Activated T-helper 1 cell treated with anti-CD3 and anti-CD28 coated beads, Interleukin-12 subunit alpha, Interleukin-12 subunit beta, Interleukin-2, Interleukin-4 antibody, amounts not matched to agents 30 ng/mL and 10 ng/mL and 1 ng/mL, durations not matched to agents 14 hours and 24 hours and 36 hours (primary cell): ENCODE measurements at regions of chr4 and their contacts with region 1.

Region 1: DNA sequence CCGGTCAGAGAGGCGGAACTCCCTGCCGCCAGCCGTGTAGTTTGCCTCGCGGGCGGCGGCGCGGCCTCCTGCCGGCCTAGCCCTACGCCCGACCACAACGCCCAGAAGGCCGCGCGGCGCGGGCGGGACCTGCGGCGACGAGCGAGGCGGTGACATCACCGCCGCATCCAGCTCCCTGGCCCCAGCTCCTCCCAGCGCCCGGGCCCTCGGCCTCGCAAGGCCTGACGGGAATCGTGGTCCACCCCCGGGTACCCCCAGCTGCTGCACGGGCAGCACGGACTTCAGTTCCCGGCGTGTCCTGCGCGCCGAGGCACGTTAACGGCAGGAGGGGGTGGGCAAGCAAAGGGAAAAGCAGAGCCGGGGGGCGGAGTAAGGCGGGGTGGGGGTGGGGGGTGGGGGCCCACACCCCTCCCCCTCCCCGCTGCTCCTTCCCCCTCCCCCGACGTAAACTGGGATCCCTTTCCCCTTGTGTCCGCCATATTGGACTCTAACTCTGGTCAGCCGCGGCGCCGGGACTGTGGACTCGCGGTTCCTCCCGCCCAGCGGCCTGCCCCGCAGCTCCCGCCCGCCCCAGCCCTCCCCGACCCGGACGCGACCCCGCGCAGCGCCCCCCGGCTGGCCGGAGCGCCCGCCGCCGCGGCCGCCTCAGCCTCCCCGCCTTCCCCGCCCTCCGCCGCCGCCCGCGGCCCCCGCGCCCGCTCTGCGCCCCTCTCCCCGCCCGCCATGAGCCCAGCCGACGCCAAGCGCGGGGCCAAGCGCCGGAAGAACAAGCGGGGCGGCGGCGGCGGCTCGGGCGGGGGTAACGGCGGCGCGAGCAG is at the start of gene FAM193A:
- DNase-seq: peak; percentile 99
- H3K4me3 Mint-ChIP-seq: peak within 1 kb of the TSS; percentile 92
- H3K27ac Mint-ChIP-seq: peak within 1 kb of the TSS; percentile 97
- H3K4me1 Mint-ChIP-seq: peaks cover 11% of the 10 kb centered on the region
- H3K27me3 Mint-ChIP-seq: peaks cover 4% of the 10 kb centered on the region
- total RNA-seq, gene FAM193A: 30.4 and 32.2 TPM in 2 replicates

Region 2: DNA sequence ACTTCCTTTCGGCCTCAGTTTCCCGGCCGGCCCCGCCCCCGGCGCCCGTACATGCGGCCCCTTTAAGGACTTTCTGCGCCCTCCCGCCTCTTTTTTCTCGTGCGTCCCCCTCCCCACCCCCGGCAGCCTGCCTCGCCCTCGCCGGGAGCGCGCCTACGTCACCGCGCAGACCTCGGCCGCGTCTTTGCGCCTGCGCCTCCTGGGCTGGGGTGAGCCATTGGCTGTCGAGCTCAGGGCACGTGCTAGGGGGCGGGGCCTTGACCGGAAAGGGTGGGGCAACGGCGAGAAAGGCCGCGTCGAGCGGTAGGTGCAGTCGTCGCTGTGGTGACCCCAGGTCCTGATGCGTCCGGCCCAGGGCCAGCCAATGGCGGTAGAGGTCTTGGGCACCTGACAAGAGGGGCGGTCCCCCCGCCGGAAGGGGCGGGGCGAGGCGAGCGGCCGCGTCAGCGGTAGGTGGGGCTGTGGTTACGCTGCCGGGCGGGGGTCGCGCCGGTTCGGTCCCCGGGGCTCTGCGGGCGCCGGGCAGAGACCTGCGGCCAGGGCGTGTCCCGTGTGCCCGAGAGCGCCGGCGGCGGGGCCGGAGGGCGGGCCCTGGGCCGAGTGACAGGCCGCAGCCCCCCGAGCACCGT is 1189.5 kb before region 1 on chr4 and contains the start of gene UVSSA:
- intact Hi-C with region 1: loop called (anchors 5 kb)
- DNase-seq: peak; percentile 100
- H3K4me3 Mint-ChIP-seq: peak within 1 kb of the TSS; percentile 92
- H3K27ac Mint-ChIP-seq: peak within 1 kb of the TSS; percentile 92
- H3K4me1 Mint-ChIP-seq: peaks cover 32% of the 10 kb centered on the region
- H3K27me3 Mint-ChIP-seq: peaks cover 2% of the 10 kb centered on the region
- total RNA-seq, gene UVSSA: 25.8 and 27.5 TPM in 2 replicates

Region 3: DNA sequence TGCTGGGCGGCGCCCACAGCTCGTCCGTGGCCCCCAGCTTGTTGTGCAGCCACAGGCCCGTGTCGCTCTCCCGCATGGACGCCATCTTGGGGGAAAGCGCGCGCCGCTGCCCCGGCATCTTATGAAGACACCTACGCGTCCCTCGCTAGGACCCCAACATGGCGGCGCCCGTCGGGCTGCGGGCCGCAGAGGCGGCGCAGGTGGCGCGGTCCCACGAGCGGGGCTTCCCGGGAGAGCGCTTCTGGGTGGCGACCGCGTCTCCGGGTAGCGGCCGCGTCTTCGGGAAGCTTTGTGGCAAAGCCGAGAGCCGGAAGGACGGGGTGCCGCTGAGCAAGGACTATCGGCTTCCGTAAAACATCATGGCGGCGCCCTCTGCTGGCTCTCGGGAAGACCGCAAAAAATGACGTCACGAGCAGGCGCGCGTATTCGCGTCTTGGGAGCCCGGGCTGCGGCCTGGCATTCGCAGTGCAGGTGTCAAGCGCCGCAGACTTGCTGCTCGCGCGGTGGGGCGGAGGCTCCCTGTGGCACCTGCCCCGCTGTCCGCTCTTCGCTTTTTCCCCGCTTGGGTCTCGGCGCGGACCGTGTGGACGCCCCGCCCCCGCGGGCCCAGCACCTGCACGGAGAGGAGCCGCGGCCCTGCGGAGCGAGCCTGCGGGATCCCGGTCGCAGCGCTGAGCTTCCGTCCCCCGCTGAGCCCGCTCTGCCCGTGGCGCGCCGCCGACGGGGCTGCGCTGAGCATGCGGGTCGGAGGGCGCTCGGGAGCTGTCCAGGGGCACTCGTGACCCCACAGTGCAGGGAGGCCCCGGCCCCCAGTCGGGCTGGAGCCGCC is 527.3 kb before region 1 on chr4 and contains the start of gene NELFA:
- intact Hi-C with region 1: loop called (anchors 5 kb)
- DNase-seq: peak; percentile 91
- H3K4me3 Mint-ChIP-seq: peak within 1 kb of the TSS; percentile 92
- H3K27ac Mint-ChIP-seq: peak within 1 kb of the TSS; percentile 88
- H3K4me1 Mint-ChIP-seq: peaks cover 31% of the 10 kb centered on the region
- H3K27me3 Mint-ChIP-seq: peaks cover 18% of the 10 kb centered on the region
- total RNA-seq, gene NELFA: 52.9 and 55.4 TPM in 2 replicates

Region 4: GRCh38 chr4:2412885-2413716 is 123.3 kb before region 1 on chr4:
- intact Hi-C with region 1: loop called (anchors 1 kb)
- DNase-seq: peak; percentile 88
- H3K4me3 Mint-ChIP-seq: peak overlapping the region; percentile 64
- H3K27ac Mint-ChIP-seq: peak overlapping the region; percentile 93
- H3K4me1 Mint-ChIP-seq: peaks cover 69% of the 10 kb centered on the region
- H3K27me3 Mint-ChIP-seq: peaks cover 16% of the 10 kb centered on the region

Region 5: DNA sequence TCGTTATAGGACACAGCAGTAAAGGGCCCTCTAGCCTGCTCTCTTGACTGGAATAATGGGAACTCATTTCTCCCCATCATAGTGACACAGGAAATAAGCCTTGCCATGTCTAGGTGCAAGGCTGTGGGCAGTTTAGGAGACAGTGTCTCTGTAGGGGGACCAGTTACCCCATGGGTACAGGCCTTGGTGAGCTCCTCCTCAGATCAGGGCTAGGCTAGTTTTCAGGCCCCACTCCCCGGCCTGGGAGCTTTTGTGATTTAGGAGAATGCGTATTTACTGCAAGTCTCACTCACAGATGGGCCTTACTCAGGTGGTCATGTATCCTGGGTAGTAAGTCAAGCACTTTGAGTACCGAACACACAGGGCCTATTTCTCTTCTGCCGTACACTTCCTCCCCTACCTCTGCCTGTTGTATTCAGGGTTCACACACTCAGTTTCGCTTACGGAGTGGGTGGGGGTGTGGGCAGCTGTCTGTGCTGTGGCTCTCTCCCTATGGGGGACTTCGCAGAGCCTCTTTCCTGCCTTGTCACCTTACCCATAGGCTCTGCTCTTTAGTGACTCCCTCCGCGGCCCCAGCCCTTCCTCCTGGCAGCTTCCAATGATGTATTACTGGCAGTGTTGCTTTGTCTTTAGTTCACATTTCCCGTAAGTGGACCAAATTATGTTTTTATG is 34.3 kb after region 1 on chr4:
- intact Hi-C with region 1: loop called (anchors 1 kb)
- DNase-seq: peak; percentile 69
- H3K4me3 Mint-ChIP-seq: peak overlapping the region; percentile 12
- H3K27ac Mint-ChIP-seq: peak overlapping the region; percentile 80
- H3K4me1 Mint-ChIP-seq: peaks cover 42% of the 10 kb centered on the region
- H3K27me3 Mint-ChIP-seq: no peaks in the 10 kb centered on the region

Region 6: DNA sequence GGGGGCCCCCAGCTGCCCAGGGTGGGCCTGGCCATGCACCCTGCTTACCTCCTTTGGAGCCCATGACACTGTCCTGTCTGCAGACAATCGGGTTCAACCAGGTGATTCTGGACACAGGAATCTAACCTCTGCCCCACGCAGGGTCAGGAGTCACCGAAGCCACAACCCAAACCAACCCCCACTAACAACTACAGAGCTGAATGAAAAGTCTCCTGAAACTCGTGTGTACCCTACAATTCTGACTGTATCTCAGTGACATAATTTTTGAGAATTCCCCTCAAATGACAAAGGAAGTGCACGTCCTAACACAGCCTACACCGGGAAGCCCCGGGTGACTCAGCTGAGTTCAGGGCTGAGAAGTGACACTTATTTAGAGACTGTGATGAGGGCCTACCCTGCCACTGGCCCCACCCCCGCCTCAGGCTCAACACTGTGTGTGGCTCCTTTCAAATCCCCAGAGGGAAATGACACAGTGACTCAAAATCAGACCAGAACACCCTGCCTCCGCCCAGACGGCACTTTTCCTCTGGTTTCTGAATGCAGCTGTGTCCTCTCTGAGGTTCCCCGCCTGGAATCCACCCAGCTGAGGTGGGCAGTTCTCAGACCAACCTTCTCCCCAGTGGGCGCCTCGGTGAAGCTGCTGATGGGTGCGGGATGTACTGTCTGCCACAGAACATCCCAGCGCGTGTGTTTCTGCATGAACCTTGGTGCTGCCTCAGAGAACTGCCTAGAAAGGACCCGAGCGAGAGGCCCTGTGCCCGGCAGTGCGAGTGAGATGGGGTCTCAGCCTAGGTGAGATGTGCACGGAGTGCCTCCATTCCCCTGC is 209.8 kb after region 1 on chr4:
- intact Hi-C with region 1: loop called (anchors 1 kb)
- DNase-seq: peak; percentile 92
- H3K4me3 Mint-ChIP-seq: peak overlapping the region; percentile 79
- H3K27ac Mint-ChIP-seq: peak overlapping the region; percentile 96
- H3K4me1 Mint-ChIP-seq: peaks cover 60% of the 10 kb centered on the region
- H3K27me3 Mint-ChIP-seq: no peaks in the 10 kb centered on the region

Region 7: GRCh38 chr4:2954358-2955185 is 418.2 kb after region 1 on chr4:
- intact Hi-C with region 1: loop called (anchors 2 kb)
- DNase-seq: peak; percentile 64
- H3K4me3 Mint-ChIP-seq: peak overlapping the region; percentile 80
- H3K27ac Mint-ChIP-seq: peak overlapping the region; percentile 98
- H3K4me1 Mint-ChIP-seq: peaks cover 72% of the 10 kb centered on the region
- H3K27me3 Mint-ChIP-seq: no peaks in the 10 kb centered on the region